ENCODE measurements at regions of chr1 and their contacts with region 1.

Region 1: DNA sequence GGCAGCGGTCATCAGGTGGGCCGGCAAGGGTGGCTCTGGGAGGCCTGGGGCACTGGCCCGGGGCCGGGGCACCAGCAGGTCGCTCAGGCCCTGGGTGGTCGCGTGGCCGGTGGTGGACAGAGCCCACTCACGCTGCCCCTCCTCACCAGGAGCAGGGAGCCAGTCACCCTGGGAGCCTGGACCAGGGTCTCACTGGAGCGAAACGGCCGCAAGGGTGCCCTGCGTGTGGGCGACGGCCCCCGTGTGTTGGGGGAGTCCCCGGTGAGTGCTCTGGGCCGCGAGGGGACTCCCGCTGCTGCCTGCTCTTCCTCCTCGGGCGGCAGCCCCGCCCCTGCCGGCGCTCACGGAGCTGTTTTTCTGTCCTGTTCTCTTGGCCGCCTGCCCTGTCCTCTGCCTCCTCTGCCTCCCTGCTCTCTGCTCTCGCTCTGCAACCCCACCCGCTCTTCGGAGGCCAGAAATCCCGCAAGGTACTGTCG is 23.5 kb downstream of the RNF223 start:
- DNase-seq: no peak
- ATAC-seq: peak; percentile 88
- H3K4me3 Mint-ChIP-seq: peak overlapping the region; percentile 56
- H3K27ac Mint-ChIP-seq: peak overlapping the region; percentile 53
- H3K4me1 Mint-ChIP-seq: peaks cover 3% of the 10 kb centered on the region
- H3K27me3 Mint-ChIP-seq: no peaks in the 10 kb centered on the region
- CTCF ChIP-seq: no peak

Region 2: DNA sequence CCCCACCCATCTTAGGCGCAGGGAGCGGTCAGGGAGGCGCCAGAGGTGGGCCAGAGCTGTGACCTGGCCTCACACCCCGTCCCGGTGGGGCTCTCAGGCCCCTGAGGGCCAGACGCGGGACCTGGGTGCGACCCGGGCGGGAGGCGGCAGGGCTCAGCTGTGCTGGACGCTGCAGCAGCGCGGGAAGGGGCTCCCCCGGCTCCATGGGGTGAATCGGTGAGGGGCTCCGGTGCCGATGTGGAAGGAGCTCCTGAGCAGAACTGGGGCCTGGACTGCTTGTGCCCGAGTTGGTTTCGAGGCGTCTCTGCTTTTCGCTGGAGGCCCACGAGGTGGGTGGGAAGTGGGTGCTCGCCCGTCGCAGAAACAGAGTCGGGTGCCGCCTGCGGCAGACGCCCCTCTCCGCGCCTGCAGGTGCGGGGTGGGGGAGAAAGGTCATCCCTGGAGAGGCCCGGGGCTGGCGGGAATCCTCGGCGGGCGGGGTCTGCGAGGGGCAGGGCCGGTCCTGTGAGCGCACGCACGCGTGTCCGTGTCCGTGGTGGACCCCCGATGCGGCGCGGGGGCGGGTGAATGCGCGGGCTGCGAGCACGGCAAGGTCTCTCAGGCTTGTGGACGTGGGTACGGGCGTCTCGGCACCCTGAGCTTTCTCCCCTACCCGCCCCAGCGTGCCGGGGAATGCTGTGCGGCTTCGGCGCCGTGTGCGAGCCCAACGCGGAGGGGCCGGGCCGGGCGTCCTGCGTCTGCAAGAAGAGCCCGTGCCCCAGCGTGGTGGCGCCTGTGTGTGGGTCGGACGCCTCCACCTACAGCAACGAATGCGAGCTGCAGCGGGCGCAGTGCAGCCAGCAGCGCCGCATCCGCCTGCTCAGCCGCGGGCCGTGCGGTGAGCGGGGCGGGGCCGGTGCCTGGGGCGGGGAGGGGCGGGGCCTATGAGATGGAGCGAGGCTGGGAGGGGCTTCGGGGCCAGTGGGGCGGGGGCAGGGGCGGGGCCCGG is 10.3 kb before region 1 on chr1:
- CTCF ChIA-PET with region 1: no interaction called
- POLR2A ChIA-PET with region 1: interaction called, 5 read pairs
- intact Hi-C with region 1: loop called (anchors 1 kb)
- DNase-seq: peak; percentile 58
- ATAC-seq: peak; percentile 77
- H3K4me3 Mint-ChIP-seq: peak overlapping the region; percentile 71
- H3K27ac Mint-ChIP-seq: peak overlapping the region; percentile 18
- H3K4me1 Mint-ChIP-seq: peaks cover 28% of the 10 kb centered on the region
- H3K27me3 Mint-ChIP-seq: peaks cover 9% of the 10 kb centered on the region
- CTCF ChIP-seq: no peak

Measured in activated B cell treated with CpG ODN at 0.5 μM for 24 hours (primary cell).